ENCODE measurements at regions of chr13 and their contacts with region 1.

Region 1: GRCh38 chr13:97344265-97345175 is 89.4 kb upstream of the RAP2A start:
- DNase-seq: peak; percentile 12
- H3K4me3 Mint-ChIP-seq: no peak overlapping the region
- H3K27ac Mint-ChIP-seq: no peak overlapping the region
- H3K4me1 Mint-ChIP-seq: no peaks in the 10 kb centered on the region
- H3K27me3 Mint-ChIP-seq: no peaks in the 10 kb centered on the region

Region 2: DNA sequence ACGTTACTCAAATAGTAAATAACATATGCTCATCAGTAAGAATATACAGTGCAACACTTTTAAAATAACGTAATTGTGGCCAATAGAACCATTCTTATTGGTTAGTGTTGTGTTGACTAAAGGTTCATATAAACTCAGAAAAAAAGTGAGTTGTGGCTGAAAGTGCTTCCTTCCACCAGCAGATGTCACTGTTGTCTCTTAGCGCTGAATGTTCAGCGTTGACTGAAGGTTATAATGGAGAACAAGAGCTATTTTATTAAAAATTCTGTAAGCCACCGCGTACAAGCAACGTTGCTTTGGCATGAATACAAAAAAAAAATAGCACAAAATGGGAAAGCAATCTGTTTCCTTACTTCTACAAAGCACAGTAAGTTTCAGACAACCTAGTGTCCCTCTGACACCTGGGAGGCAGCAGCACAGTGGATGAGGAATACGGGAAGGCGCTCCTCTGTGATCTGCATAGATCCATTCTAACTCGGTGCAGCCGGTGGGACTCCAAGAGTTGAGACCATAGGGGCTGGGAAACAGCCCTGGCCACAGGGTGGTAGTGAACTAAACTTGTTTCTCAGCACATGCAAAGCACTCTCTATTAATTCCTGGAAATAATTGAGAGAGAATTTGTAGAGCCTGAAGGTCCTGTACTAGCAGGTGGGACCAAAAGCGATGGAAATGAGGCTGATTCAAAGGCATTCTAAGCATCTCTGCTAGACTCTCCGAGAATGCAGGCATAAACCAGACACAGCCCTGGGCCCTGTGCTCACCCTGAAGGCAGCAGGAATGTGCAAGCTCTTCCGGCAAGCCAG is 326.3 kb before region 1 on chr13:
- intact Hi-C with region 1: loop called (anchors 5 kb)
- DNase-seq: peak; percentile 6
- H3K4me3 Mint-ChIP-seq: no peak overlapping the region
- H3K27ac Mint-ChIP-seq: no peak overlapping the region
- H3K4me1 Mint-ChIP-seq: no peaks in the 10 kb centered on the region
- H3K27me3 Mint-ChIP-seq: peaks cover 13% of the 10 kb centered on the region

Region 3: GRCh38 chr13:97109841-97110492 is 234.6 kb before region 1 on chr13:
- intact Hi-C with region 1: loop called (anchors 1 kb)
- DNase-seq: peak; percentile 67
- H3K4me3 Mint-ChIP-seq: no peak overlapping the region
- H3K27ac Mint-ChIP-seq: no peak overlapping the region
- H3K4me1 Mint-ChIP-seq: peaks cover 8% of the 10 kb centered on the region
- H3K27me3 Mint-ChIP-seq: peaks cover 17% of the 10 kb centered on the region

Region 4: DNA sequence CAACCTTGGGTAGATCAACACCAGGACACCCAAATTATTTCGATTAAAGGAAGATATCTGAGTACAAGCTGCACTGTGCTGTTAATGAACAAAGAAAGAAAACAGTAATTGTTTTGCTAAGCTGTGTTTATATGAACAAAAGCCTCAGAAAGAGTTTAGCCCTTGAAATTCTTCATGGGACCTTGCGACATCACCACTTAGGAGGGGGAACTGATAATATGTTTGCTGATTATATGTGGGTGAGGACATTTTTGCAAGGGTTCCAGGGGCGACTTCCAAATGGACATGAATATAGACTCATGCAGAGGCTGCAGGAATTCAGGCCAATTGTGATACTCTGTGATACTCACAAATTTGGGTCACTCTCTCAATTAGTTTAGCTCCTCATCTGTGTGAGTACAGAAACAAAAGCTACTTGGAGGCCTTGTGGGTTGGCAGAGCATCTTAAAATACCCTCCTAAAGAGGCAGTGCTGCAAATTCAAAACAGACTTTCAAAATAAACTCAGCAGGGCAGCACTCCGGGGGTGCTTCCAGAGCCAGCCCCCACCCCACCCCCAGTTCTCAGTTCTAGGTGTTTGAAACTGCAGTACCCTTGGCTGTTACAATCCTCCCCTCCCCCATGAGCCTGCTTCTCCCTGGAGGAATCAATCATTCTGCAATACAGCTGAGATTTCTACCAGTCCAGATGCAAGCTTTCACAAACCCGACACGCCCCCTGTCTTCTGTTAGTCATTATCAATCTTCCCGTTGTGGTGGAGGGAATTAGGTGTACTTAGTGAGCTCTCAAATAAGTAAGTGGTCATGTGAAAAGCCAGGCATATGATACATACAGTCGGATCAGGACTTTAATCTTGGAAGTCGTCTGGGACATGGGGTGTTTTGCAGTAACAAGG is 219.4 kb before region 1 on chr13:
- intact Hi-C with region 1: loop called (anchors 5 kb)
- DNase-seq: no peak
- H3K4me3 Mint-ChIP-seq: no peak overlapping the region
- H3K27ac Mint-ChIP-seq: no peak overlapping the region
- H3K4me1 Mint-ChIP-seq: peaks cover 20% of the 10 kb centered on the region
- H3K27me3 Mint-ChIP-seq: peaks cover 16% of the 10 kb centered on the region

Region 5: GRCh38 chr13:97221989-97222700 is 122.4 kb before region 1 on chr13 and contains the start of gene MBNL2:
- intact Hi-C with region 1: loop called (anchors 1 kb)
- DNase-seq: peak; percentile 80
- H3K4me3 Mint-ChIP-seq: peak within 1 kb of the TSS; percentile 87
- H3K27ac Mint-ChIP-seq: peak within 1 kb of the TSS; percentile 82
- H3K4me1 Mint-ChIP-seq: peaks cover 49% of the 10 kb centered on the region
- H3K27me3 Mint-ChIP-seq: no peaks in the 10 kb centered on the region
- total RNA-seq, gene MBNL2: 20.7 and 24.2 TPM in 2 replicates

Region 6: GRCh38 chr13:97286317-97287046 is 58.0 kb before region 1 on chr13:
- intact Hi-C with region 1: loop called (anchors 5 kb)
- DNase-seq: no peak
- H3K4me3 Mint-ChIP-seq: no peak overlapping the region
- H3K27ac Mint-ChIP-seq: no peak overlapping the region
- H3K4me1 Mint-ChIP-seq: peaks cover 40% of the 10 kb centered on the region
- H3K27me3 Mint-ChIP-seq: peaks cover under 1% of the 10 kb centered on the region

Region 7: DNA sequence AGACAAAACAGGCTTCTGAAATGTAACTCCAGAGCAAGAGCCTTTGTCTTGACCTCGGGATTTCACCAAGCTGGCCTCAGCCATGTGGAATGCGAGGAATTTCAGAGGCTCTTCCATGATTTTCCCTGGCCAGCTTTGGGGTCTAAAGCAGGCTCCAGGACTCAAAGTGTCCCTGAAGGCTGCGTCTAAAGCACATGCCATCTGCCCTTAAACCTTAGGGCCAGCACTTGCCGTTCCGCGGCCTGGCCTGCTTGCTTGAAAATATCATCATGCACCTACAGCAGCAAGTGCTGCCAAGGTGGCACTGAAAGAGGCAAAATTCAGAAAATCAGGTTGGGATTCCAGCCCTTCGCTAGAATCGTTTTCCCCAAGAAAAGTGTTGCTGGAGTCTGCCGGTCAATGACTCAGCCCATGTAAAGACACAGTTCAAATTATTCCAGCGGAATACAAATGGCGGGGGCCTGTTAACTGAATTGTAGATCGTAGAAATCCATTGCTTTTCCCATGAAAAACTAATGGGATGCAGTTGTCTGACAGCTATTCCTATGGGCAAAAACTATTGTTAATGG is 16.2 kb before region 1 on chr13:
- intact Hi-C with region 1: no loop called
- DNase-seq: no peak
- H3K4me3 Mint-ChIP-seq: no peak overlapping the region
- H3K27ac Mint-ChIP-seq: no peak overlapping the region
- H3K4me1 Mint-ChIP-seq: no peaks in the 10 kb centered on the region
- H3K27me3 Mint-ChIP-seq: peaks cover 2% of the 10 kb centered on the region

Region 8: GRCh38 chr13:97359181-97360057 is 14.9 kb after region 1 on chr13:
- intact Hi-C with region 1: loop called (anchors 1 kb)
- DNase-seq: peak; percentile 11
- H3K4me3 Mint-ChIP-seq: no peak overlapping the region
- H3K27ac Mint-ChIP-seq: no peak overlapping the region
- H3K4me1 Mint-ChIP-seq: no peaks in the 10 kb centered on the region
- H3K27me3 Mint-ChIP-seq: no peaks in the 10 kb centered on the region

Measured in activated T-helper 1 cell treated with anti-CD3 and anti-CD28 coated beads, Interleukin-12 subunit alpha, Interleukin-12 subunit beta, Interleukin-2, Interleukin-4 antibody, amounts not matched to agents 30 ng/mL and 10 ng/mL and 1 ng/mL, durations not matched to agents 14 hours and 24 hours and 36 hours (primary cell).